ENCODE measurements at regions of chr15 and their contacts with region 1.

Region 1: GRCh38 chr15:98647774-98648653 is at the start of gene IGF1R:
- DNase-seq: peak; percentile 74 to 97 (median 79)

Region 2: DNA sequence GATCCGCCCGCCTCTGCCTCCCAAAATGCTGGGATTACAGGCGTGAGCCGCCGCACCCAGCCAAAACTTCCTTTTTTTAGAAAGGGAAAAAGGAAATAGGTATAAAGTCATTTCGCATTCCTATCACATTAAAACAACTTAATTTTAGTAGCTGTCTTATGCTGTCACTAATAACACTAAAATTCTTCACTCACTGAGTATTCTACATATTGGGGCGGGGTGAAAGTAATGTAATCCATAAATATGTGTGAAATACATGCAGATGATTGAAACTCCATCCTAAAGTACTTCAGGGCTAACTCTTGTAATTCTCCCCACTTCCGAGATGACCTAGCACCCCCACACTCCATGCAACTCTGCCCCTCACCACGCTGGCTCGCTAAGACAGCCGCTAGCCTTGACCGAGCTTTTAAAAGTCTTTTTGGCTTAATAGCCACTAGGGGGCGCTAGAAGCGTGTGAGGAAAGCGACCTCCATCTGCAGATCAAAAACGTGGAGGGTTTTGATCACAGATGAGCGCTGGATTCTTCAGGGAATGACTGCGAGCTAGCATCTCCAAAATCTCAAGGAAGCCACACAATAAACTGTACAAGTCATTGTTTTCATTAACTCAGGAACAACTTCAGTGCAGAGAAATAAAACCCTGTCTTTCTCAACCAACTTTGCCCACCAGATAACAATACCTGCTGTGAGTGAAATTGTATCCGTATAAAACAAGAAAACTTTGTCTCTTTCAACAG is 129.0 kb before region 1 on chr15:
- intact Hi-C with region 1: loop called (anchors 1 kb)
- DNase-seq: peak in 5 of 10 donors; percentile 30 to 73 (median 45)

Region 3: GRCh38 chr15:98779463-98780071 is 131.6 kb after region 1 on chr15:
- intact Hi-C with region 1: loop called (anchors 5 kb)
- DNase-seq: peak; percentile 53 to 95 (median 82)

Region 4: GRCh38 chr15:98800437-98801233 is 152.6 kb after region 1 on chr15:
- intact Hi-C with region 1: loop called (anchors 2 kb)
- DNase-seq: peak; percentile 38 to 95 (median 66)

Region 5: GRCh38 chr15:98865397-98866339 is 217.7 kb after region 1 on chr15:
- intact Hi-C with region 1: loop called (anchors 5 kb)
- DNase-seq: peak; percentile 58 to 96 (median 76)

Region 6: GRCh38 chr15:99076552-99077308 is 428.7 kb after region 1 on chr15:
- intact Hi-C with region 1: loop called (anchors 5 kb)
- DNase-seq: peak in 4 of 10 donors; percentile 22 to 41 (median 31)